ENCODE measurements at regions of chr3 and their contacts with region 1.

Region 1: DNA sequence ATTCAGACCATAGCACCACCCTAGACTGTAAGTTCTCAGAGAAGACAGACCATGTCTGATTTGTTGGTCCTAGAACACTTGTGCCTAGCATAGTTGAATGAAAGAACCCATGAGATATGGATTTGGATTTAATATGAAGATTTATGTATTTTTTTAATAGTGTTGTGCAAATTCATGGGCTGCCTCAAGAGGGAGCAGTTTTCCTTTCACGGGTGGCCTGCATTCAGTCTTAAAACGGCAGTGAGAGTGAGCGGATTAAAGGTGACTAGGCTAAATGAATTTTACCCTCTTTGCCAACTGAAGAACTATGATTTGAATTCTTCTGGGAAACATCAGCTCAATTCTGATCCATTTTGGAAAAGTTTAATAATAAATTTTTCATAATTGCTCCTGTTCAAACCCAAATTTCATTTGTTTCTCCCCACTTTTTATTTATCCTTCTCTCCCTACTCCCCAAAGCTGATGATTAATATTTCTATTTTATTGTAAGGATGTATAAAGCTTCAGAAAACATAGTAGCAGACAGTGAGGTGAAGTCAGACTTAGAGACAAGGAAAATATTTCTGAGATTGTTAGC is 67.3 kb downstream of the MORC1 start:
- DNase-seq: no peak
- ATAC-seq: peak; percentile 80
- H3K4me3 ChIP-seq: no peak overlapping the region
- H3K27ac ChIP-seq: no peak overlapping the region
- H3K4me1 ChIP-seq: no peaks in the 10 kb centered on the region
- H3K27me3 ChIP-seq: no peaks in the 10 kb centered on the region
- CTCF ChIP-seq: peak; percentile 57 to 80 (median 64)
- EP300 ChIP-seq: no peak
- POLR2A ChIP-seq: no peak
- RAD21 ChIP-seq: peak; percentile 69

Region 2: GRCh38 chr3:109071350-109072142 is 20.9 kb after region 1 on chr3:
- CTCF ChIA-PET with region 1: interaction called, 21 read pairs
- POLR2A ChIA-PET with region 1: no interaction called
- RAD21 ChIA-PET with region 1: interaction called, 7 read pairs
- SMC1A ChIA-PET with region 1: interaction called, 6 read pairs
- in situ Hi-C with region 1: no loop called
- intact Hi-C with region 1: no loop called
- DNase-seq: no peak
- ATAC-seq: peak; percentile 68
- H3K4me3 ChIP-seq: peak overlapping the region; percentile 20
- H3K27ac ChIP-seq: no peak overlapping the region
- H3K4me1 ChIP-seq: peaks cover 13% of the 10 kb centered on the region
- H3K27me3 ChIP-seq: no peaks in the 10 kb centered on the region
- CTCF ChIP-seq: peak in 2 of 3 experiments; percentile 7 to 18; a peak in 1 of 6 replicates
- EP300 ChIP-seq: no peak
- POLR2A ChIP-seq: no peak
- RAD21 ChIP-seq: 0 out of 2 replicates have a peak, but pooled peaks have one; percentile 8

Region 3: GRCh38 chr3:109098079-109098644 is 47.5 kb after region 1 on chr3:
- CTCF ChIA-PET with region 1: no interaction called
- POLR2A ChIA-PET with region 1: no interaction called
- RAD21 ChIA-PET with region 1: no interaction called
- SMC1A ChIA-PET with region 1: no interaction called
- in situ Hi-C with region 1: no loop called
- intact Hi-C with region 1: no loop called
- DNase-seq: no peak
- ATAC-seq: peak; percentile 84
- H3K4me3 ChIP-seq: no peak overlapping the region
- H3K27ac ChIP-seq: no peak overlapping the region
- H3K4me1 ChIP-seq: no peaks in the 10 kb centered on the region
- H3K27me3 ChIP-seq: no peaks in the 10 kb centered on the region
- CTCF ChIP-seq: peak in 2 of 3 experiments; percentile 50 to 56; a peak in 4 of 6 replicates
- EP300 ChIP-seq: no peak
- POLR2A ChIP-seq: no peak
- RAD21 ChIP-seq: peak; percentile 27; the same call in 1 of the 2 replicates

Measured in GM12878 (cell line).